ENCODE measurements at regions of chr12 and their contacts with region 1.

Region 1: GRCh38 chr12:54368709-54369583 is 4.7 kb upstream of the GPR84 start:
- DNase-seq: peak; percentile 91
- ATAC-seq: peak; percentile 75 to 76

Region 2: DNA sequence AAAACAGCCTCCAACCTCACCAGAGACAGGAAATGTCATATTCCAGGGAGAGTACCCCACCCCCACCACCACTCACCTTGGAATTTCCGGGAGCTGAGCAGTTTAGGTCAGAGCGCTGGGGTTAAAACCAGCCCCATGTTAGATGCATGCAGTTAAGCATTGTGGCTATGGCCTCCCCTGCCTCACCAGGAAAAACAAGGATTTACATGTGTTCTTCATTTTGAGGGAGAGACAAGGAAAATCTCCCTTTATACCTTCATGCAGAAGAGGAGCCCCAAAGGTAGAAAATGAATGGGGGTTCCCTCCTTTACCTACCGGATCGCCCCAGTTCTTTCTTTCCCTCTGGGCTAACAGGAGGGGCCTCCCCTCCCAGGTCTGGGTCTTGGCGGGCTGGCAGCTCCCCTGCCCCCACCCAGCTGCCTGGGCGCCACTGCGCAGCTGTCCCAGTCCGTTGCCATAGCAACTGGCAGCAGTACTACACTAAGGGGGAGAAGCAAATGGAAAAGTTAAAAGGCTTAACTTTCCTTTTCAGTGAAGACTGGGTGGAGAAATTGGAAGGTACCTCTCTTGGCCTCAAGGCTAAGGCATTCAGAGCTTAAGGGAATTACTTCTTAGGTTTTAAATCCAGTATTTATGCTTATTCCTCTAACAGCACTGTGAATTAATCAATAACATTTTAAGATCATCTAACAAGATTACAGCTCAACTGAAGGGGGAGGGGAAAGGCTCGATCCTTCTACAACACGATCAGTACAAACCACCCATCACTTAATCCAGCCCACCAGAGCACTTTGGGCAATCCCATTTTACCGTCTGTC is 109.5 kb before region 1 on chr12:
- intact Hi-C with region 1: loop called in 1 of 2 experiments (anchors 10 kb)
- DNase-seq: peak; percentile 84
- ATAC-seq: peak; percentile 95 to 97

Region 3: GRCh38 chr12:54279227-54279865 is 89.6 kb before region 1 on chr12:
- intact Hi-C with region 1: no loop called
- DNase-seq: peak; percentile 97
- ATAC-seq: peak; percentile 89 to 92

Region 4: GRCh38 chr12:54294152-54294952 is 74.6 kb before region 1 on chr12:
- intact Hi-C with region 1: loop called (anchors 10 kb)
- DNase-seq: peak; percentile 48
- ATAC-seq: peak in 1 of 2 donors; percentile 67

Region 5: GRCh38 chr12:54419088-54419892 is 50.3 kb after region 1 on chr12 and contains the start of gene ITGA5:
- intact Hi-C with region 1: no loop called
- DNase-seq: peak; percentile 90
- ATAC-seq: peak; percentile 83 to 84
- total RNA-seq, gene ITGA5: 45.7 to 133 TPM

Region 6: GRCh38 chr12:54472494-54473262 is 103.7 kb after region 1 on chr12:
- intact Hi-C with region 1: no loop called
- DNase-seq: no peak
- ATAC-seq: no peak